ENCODE measurements at regions of chr2 and their contacts with region 1.

Region 1: DNA sequence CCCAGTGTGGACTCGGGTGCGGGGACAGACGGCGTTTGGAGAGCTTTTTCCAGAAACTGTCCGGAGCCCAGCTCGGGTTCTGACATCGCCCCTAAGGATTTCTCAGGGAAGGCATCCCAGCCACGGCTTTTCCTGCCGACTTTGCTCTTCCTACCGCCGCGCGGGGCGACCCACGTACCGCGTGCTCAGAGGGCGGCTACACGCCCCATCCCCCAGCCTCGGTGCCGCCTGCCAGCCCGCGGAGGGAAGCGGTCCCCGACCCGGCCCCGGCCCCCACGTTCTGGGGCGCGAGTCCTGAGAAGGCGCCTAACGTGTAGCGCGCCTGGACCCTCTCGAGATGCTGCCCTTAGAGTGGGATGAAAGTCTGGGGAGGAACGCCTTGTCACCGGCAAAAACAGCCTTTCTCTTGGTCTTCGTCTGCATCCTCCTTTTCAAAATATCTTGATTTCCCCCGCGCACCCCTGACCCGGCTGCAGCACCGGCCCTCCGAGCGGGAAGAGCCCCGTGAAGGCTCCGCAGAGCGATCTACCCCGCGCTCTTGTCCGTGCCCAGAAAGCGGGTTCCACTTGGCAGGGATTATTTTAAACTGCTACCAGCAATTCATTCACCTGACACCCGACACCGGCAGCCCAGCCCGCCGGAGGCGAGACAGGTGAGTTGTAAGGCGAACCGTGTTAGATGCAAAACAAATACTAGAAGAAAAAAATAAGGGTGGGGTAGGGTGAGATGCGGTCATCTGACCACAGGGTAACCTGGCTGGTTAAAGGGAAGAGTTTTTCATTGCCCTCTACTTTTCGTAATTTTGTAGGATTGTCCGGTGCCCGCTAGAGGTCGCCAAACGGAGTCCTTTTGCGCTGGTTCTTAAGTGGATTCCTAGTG is 812 bp upstream of the KCNG3 start:
- DNase-seq: peak; percentile 62
- ATAC-seq: peak; percentile 76

Region 2: DNA sequence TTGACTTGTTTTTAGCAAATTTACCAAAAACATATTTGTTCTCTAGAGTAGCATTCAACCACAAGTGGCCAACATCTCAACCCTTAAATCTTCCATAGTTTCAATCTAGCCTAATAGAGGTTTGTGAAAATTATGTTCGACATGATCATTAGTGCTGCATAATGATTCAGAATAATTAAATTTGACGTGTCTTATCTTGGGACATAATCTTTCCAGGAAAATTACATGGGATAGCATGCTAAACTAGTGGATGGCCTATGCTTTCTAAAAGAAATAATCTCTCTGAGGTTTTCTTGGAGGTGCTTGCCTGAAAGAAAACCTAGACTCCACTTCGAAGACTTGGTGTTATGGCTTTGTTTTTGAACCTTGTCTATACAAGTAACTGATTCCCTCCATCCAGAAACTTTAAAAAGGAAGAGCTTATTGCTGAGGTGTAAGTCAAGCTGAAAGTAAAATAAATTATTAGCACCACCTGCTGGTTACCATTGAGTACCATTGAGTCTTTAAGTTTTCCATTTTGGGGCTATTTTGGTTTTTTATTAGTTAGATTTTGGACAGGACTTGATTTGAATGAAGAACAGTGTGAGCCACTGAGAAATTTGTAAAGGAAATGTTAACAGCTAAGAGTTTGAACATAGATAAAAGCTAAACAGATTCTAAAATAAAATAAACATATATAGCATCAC is 166.3 kb before region 1 on chr2:
- intact Hi-C with region 1: no loop called
- DNase-seq: no peak
- ATAC-seq: no peak

Region 3: GRCh38 chr2:42547014-42547413 is 52.4 kb after region 1 on chr2:
- intact Hi-C with region 1: no loop called
- DNase-seq: no peak
- ATAC-seq: no peak

Region 4: DNA sequence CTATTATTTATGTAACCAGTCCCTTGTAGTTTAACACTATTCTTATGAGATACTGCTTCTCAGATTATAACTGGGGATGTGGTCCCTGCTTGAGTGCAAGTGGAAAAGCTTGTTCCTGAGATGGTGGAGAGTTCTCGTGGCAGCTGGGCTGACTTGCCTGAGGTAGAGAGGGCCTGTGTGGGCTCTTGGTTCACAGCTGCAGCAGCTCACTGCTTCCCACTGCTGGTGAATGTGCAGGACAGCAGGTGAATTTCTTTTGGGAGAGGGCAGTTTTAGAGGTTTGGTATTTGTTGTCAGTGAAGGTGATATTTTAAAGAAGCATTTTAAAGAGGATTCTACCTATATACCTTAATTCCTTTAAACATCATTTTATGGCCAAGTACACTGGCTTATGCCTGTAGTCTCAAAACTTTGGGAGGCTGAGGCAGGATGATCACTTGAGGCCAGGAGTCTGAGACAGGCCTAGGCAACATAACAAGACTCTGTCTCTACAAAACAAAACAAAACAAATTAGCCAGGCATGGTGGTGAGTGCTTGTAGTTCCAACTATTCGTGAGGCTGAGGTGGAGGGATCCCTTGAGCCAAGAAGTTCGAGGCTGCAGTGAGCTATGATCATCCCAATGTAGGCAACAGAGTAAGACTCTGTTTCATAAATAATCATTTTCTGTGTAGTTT is 168.6 kb after region 1 on chr2:
- intact Hi-C with region 1: loop called (anchors 2 kb)
- DNase-seq: peak; percentile 62
- ATAC-seq: peak; percentile 86

Measured in left ventricle myocardium superior (tissue), 1 donor.